Lower leg skin (tissue), 4 donors: ENCODE measurements at regions of chr1 and their contacts with region 1.

Region 1: GRCh38 chr1:155167166-155168104 is 5.7 kb downstream of the KRTCAP2 start:
- DNase-seq: peak; percentile 80 to 97
- H3K4me3 ChIP-seq: no peak overlapping the region
- CTCF ChIP-seq: peak in 1 of 3 donors; percentile 17
- POLR2A ChIP-seq: no peak

Region 2: GRCh38 chr1:155091071-155091709 is 76.2 kb before region 1 on chr1:
- intact Hi-C with region 1: loop called (anchors 2 kb)
- DNase-seq: peak; percentile 66 to 95
- H3K4me3 ChIP-seq: no peak overlapping the region
- CTCF ChIP-seq: peak in 1 of 3 donors; percentile 78
- POLR2A ChIP-seq: no peak